ENCODE measurements at regions of chr6 and their contacts with region 1.

Region 1: GRCh38 chr6:36759148-36759759 is 61.6 kb downstream of the RAB44 start:
- DNase-seq: peak; percentile 85
- ATAC-seq: peak; percentile 75
- H3K4me3 Mint-ChIP-seq: no peak overlapping the region
- H3K27ac Mint-ChIP-seq: no peak overlapping the region
- H3K4me1 Mint-ChIP-seq: peaks cover 44% of the 10 kb centered on the region
- H3K27me3 Mint-ChIP-seq: peaks cover 2% of the 10 kb centered on the region

Region 2: GRCh38 chr6:36605560-36606391 is 153.5 kb before region 1 on chr6:
- CTCF ChIA-PET with region 1: interaction called, 25 read pairs
- POLR2A ChIA-PET with region 1: interaction called, 3 read pairs
- DNase-seq: no peak
- ATAC-seq: no peak
- H3K4me3 Mint-ChIP-seq: no peak overlapping the region
- H3K27ac Mint-ChIP-seq: peak overlapping the region; percentile 33
- H3K4me1 Mint-ChIP-seq: peaks cover 61% of the 10 kb centered on the region
- H3K27me3 Mint-ChIP-seq: no peaks in the 10 kb centered on the region

Region 3: DNA sequence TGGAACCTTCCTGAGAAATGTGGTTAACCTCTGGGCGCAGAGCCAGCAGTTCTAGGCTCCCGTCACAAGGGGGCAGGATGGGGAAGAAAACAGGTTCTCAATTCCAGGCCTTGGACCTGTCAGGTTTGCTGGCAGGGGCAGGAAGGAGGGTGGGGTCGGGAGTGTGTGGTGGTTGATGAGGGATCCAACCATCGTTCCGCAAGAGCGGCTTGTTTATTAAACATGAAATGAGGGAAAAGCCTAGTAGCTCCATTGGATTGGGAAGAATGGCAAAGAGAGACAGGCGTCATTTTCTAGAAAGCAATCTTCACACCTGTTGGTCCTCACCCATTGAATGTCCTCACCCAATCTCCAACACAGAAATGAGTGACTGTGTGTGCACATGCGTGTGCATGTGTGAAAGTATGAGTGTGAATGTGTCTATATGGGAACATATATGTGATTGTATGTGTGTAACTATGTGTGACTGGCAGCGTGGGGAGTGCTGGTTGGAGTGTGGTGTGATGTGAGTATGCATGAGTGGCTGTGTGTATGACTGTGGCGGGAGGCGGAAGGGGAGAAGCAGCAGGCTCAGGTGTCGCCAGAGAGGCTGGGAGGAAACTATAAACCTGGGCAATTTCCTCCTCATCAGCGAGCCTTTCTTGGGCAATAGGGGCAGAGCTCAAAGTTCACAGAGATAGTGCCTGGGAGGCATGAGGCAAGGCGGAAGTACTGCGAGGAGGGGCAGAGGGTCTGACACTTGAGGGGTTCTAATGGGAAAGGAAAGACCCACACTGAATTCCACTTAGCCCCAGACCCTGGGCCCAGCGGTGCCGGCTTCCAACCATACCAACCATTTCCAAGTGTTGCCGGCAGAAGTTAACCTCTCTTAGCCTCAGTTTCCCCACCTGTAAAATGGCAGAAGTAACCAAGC is 135.5 kb before region 1 on chr6:
- CTCF ChIA-PET with region 1: interaction called, 128 read pairs
- POLR2A ChIA-PET with region 1: no interaction called
- DNase-seq: peak; percentile 83
- ATAC-seq: peak; percentile 77
- H3K4me3 Mint-ChIP-seq: no peak overlapping the region
- H3K27ac Mint-ChIP-seq: peak overlapping the region; percentile 1
- H3K4me1 Mint-ChIP-seq: peaks cover 38% of the 10 kb centered on the region
- H3K27me3 Mint-ChIP-seq: no peaks in the 10 kb centered on the region

Region 4: DNA sequence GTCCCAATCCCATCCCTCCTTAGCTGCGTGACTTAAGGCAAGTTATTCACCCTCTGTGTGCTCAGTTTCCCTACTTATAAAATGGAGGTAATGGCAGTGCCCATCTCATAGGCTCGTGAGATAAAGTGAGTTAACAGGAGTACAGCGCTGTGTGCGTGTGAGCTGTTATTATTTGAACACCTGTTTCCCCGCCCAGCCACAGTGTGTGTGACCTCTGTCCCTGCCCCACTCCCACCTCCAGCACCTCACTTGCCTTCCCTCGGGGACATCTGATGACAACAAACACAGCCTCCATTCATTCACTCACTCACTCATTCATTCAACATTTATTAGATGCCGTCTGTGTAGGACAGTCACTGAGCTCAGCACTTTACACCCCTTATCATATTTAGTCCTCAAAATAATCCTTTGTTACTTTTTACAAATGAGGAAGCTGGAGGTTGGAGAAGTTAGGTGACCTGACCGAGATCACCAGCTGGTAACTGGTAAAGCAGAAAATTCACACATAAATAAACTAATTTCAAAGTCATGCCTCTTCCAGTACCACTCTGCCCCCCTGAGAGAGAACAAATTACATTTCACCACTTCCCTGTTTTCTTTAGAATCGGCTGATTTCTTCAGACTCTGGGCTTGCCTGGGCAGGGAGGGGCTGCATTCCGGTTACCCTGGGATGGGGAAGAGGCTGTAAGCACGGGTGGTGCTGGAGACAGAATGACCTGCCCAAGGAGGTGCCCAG is 21.4 kb after region 1 on chr6:
- CTCF ChIA-PET with region 1: interaction called, 375 read pairs
- POLR2A ChIA-PET with region 1: no interaction called
- DNase-seq: no peak
- ATAC-seq: no peak
- H3K4me3 Mint-ChIP-seq: no peak overlapping the region
- H3K27ac Mint-ChIP-seq: peak overlapping the region; percentile 57
- H3K4me1 Mint-ChIP-seq: peaks cover 38% of the 10 kb centered on the region
- H3K27me3 Mint-ChIP-seq: peaks cover 11% of the 10 kb centered on the region

Region 5: DNA sequence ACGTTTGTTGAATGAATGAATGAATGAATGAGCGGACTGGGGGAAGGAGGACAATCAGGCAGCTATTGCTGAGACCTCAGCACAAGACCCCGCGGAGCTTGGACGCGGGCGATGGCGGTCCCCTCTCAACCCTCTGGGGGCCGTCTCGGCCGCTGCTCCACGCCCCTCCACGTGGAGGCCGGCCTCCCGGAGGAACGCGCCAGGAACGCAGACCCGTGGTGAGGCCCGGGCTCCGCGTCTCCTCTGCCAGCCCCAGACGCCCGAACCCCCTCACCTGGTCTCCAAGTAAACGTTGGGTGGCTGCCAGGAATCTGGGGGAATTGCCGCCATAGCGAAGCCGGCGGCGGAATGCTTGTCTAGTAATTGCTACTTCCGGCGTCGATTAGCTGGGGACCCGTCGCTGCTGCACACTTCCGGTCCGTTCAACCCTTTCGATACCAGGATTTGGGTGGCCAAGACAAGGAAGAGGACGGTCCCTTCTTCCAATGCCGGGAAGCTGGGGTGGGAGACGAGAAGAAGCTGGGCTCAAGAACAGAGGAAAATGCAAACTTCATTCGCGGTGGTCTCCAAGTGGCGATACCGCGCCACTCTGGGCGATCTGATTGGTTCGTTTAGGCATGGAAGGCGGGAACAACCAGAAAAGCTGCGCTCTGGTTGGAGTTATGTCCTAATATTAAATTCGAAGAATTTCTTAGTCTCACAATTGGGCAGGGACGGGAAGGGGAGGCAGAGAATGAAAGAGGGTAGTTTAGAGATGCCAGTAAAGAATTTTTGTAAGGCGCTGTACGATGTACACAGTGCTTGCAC is 115.4 kb after region 1 on chr6 and contains the start of gene PPIL1:
- CTCF ChIA-PET with region 1: interaction called, 85 read pairs
- POLR2A ChIA-PET with region 1: no interaction called
- DNase-seq: peak; percentile 89
- ATAC-seq: peak; percentile 94
- H3K4me3 Mint-ChIP-seq: peak within 1 kb of the TSS; percentile 83
- H3K27ac Mint-ChIP-seq: peak within 1 kb of the TSS; percentile 98
- H3K4me1 Mint-ChIP-seq: peaks cover 47% of the 10 kb centered on the region
- H3K27me3 Mint-ChIP-seq: peaks cover 8% of the 10 kb centered on the region
- total RNA-seq, gene PPIL1: 32.6 to 33.5 TPM

Measured in activated CD8-positive, alpha-beta T cell treated with anti-CD3 and anti-CD28 coated beads, Interleukin-2, amount 10 ng/mL, durations not matched to agents 7 days and 5 days (primary cell).